Endothelial cell of umbilical vein (primary cell): ENCODE measurements at regions of chr5 and their contacts with region 1.

Region 1: GRCh38 chr5:160390787-160391696 is 8.8 kb downstream of the FAM200C start:
- DNase-seq: peak; percentile 30
- H3K4me3 ChIP-seq: no peak overlapping the region
- H3K27ac ChIP-seq: no peak overlapping the region
- H3K4me1 ChIP-seq: no peaks in the 10 kb centered on the region
- H3K27me3 ChIP-seq: no peaks in the 10 kb centered on the region
- CTCF ChIP-seq: peak; percentile 11 to 20
- POLR2A ChIP-seq: no peak

Region 2: DNA sequence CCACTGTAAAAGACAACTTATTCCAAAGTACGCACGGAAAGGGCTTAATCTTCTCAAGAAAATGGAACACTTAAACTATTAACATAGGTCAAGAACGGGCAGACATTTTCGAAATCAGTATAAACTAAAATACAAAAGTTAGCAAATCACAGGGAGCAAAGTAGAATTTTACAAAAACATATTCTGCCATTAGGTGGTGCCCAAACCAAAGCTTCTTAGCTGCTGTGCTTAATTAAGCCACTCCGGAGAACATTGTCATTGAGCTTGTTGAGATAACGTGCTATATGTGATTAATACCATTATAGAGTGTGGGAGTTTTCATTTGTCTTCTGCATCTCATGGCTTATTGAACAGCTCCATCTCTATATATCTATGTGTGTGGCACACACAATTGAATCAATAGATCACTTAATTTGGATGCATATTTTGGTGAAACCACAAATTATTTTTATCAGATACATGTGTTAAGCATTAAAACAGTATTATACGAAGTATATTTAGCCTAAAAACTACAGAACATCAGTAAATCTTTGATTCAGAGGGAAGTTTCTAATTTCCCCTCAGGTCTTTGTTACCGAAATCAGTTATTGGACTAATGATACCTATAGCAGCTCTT is 1104.5 kb before region 1 on chr5:
- CTCF ChIA-PET with region 1: interaction called, 11 read pairs
- POLR2A ChIA-PET with region 1: no interaction called
- dilution Hi-C with region 1: no loop called
- intact Hi-C with region 1: loop called (anchors 10 kb)
- DNase-seq: peak; percentile 47
- H3K4me3 ChIP-seq: no peak overlapping the region
- H3K27ac ChIP-seq: no peak overlapping the region
- H3K4me1 ChIP-seq: no peaks in the 10 kb centered on the region
- H3K27me3 ChIP-seq: no peaks in the 10 kb centered on the region
- CTCF ChIP-seq: peak in 1 of 2 donors; percentile 31
- POLR2A ChIP-seq: no peak

Region 3: GRCh38 chr5:160071516-160071915 is 319.5 kb before region 1 on chr5:
- CTCF ChIA-PET with region 1: interaction called, 12 read pairs
- POLR2A ChIA-PET with region 1: no interaction called
- dilution Hi-C with region 1: no loop called
- intact Hi-C with region 1: no loop called
- DNase-seq: no peak
- H3K4me3 ChIP-seq: no peak overlapping the region
- H3K27ac ChIP-seq: peak overlapping the region; percentile 31
- H3K4me1 ChIP-seq: peaks cover 23% of the 10 kb centered on the region
- H3K27me3 ChIP-seq: no peaks in the 10 kb centered on the region
- CTCF ChIP-seq: no peak
- POLR2A ChIP-seq: no peak

Region 4: DNA sequence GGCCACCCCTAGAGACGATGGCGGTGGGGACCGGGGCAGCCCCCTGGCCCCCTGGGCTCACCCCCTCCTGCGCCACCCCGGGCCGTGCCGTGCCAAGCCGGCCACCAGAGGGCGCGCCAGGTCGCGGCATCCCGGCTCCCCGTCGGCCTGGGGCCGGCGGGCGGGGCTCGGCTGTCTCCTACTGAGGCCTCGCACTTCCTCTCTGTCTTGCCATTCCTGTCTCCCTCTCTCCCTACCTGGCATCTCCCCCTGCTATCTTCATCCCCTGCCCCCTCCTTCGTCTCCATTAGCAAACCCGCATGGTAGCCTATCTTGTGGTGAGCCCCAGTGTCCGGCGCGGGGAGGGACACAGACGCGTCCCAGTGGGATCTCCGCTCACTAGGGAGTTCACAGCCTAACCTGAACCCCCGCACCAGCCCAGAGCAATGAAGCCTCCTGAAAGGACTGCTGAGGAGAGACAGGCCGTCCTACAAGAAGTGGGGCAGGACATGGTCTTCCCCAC is 191.6 kb before region 1 on chr5:
- CTCF ChIA-PET with region 1: interaction called, 38 read pairs
- POLR2A ChIA-PET with region 1: no interaction called
- dilution Hi-C with region 1: no loop called
- intact Hi-C with region 1: loop called (anchors 1 kb)
- DNase-seq: peak; percentile 42
- H3K4me3 ChIP-seq: peak overlapping the region in 1 of 3 experiments; percentile 35
- H3K27ac ChIP-seq: no peak overlapping the region
- H3K4me1 ChIP-seq: peaks cover 12% of the 10 kb centered on the region
- H3K27me3 ChIP-seq: no peaks in the 10 kb centered on the region
- CTCF ChIP-seq: peak; percentile 85 to 93
- POLR2A ChIP-seq: no peak

Region 5: DNA sequence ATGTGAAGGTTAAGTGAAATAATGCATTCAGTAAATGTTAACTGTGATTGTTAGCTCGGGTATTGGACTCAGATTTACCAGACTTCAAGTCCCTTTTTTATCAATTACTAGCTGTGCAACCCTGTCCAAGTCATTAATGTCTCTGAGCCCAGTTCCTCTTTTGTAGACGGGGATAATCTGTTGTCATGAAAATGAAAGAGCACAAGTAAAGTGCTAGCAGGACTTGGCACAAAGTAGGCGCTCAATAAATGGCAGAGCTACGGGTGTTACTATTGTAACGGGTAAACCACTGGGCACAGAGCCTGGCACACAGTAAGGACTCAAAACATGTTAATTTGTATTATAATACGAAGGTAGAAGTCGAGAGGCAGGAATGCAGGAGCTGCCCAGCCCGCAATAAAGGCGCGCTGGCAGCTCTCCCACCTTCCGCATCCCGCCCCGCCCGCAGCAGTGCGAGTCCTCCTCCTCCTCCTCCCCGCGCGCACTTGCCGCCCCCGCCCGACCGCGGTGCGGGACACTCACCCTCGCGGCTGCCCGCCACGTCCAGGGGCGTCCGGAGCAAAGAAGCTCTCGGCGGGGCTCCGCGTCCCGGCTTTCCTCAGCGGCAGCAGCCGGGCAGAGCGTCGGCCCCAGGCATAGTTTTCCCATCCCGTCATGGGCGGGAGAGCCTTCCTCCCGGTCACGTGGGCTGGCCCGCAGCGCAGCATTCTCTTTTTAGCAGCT is 20.9 kb before region 1 on chr5 and contains the start of gene C1QTNF2:
- CTCF ChIA-PET with region 1: interaction called, 23 read pairs
- POLR2A ChIA-PET with region 1: no interaction called
- dilution Hi-C with region 1: no loop called
- intact Hi-C with region 1: no loop called
- DNase-seq: peak; percentile 44
- H3K4me3 ChIP-seq: peak within 1 kb of the TSS; percentile 42 to 63 (median 46)
- H3K27ac ChIP-seq: no peak within 1 kb of the TSS
- H3K4me1 ChIP-seq: peaks cover 7% of the 10 kb centered on the region
- H3K27me3 ChIP-seq: peaks cover 50 to 56% of the 10 kb centered on the region in 2 experiments
- CTCF ChIP-seq: no peak
- POLR2A ChIP-seq: no peak
- total RNA-seq, gene C1QTNF2: 0.53 TPM in 1 of 2 replicates, not detected in the other

Region 6: GRCh38 chr5:160496334-160496733 is 105.3 kb after region 1 on chr5:
- CTCF ChIA-PET with region 1: no interaction called
- POLR2A ChIA-PET with region 1: no interaction called
- dilution Hi-C with region 1: no loop called
- intact Hi-C with region 1: no loop called
- DNase-seq: no peak
- H3K4me3 ChIP-seq: no peak overlapping the region
- H3K27ac ChIP-seq: no peak overlapping the region
- H3K4me1 ChIP-seq: no peaks in the 10 kb centered on the region
- H3K27me3 ChIP-seq: peaks cover 0 to 2% of the 10 kb centered on the region in 2 experiments
- CTCF ChIP-seq: no peak
- POLR2A ChIP-seq: no peak